ENCODE measurements at regions of chr19 and their contacts with region 1.

Region 1: GRCh38 chr19:9621156-9622037 is at the start of gene ZNF561:
- DNase-seq: peak; percentile 84 to 93
- ATAC-seq: peak; percentile 93 to 98 (median 96)
- H3K4me3 ChIP-seq: peak within 1 kb of the TSS; percentile 94
- H3K27ac ChIP-seq: peak within 1 kb of the TSS; percentile 84
- H3K4me1 ChIP-seq: peaks cover 15% of the 10 kb centered on the region
- H3K27me3 ChIP-seq: no peaks in the 10 kb centered on the region
- CTCF ChIP-seq: no peak
- total RNA-seq, gene ZNF561: 8.2 to 17.9 (median 14.3) TPM

Region 2: DNA sequence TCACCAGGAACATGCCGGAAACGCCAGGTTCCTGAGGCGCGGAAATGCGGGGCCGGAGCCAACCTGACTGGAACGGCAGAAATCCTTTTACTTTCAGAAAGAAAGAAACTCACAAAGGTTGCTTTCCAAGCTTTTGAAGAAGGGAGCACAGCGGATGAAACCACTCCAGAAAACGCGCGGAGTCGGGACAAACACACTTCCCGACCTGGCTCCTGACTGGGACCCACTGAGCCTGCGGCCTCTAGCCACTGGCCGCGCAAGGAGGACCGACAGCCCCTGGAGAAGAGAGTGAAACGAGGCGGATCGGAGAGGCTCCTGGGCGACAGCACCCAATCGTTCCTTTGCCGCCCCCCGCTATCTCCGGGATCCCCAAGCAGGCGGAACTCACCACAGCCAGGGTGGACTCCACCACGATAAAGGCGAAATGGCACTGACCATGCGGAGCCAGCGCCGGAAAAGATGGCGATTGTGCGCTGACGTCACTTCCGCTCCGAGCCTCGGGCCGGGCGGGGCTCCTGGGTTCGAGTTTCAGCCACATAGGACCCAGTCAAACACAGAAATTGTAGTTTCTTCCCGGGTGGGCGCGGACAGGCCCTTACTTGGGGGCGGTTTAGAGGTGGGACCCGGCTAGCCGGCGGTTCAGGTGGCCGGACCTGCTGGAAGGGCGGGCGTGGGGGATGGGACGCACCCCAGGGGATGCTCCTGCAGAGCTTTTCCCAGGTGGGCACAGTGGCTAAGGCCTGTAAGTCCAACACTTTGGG is 37.1 kb before region 1 on chr19 and contains the start of gene ZNF121:
- intact Hi-C with region 1: loop called in 1 of 2 experiments (anchors 5 kb)
- DNase-seq: peak; percentile 86 to 91
- ATAC-seq: peak; percentile 95 to 99 (median 98)
- H3K4me3 ChIP-seq: peak within 1 kb of the TSS; percentile 99
- H3K27ac ChIP-seq: peak within 1 kb of the TSS; percentile 98
- H3K4me1 ChIP-seq: peaks cover 19% of the 10 kb centered on the region
- H3K27me3 ChIP-seq: peaks cover 0 to 17% (median 0%) of the 10 kb centered on the region in 3 donors
- CTCF ChIP-seq: no peak
- total RNA-seq, gene ZNF121: 15.6 to 32.2 (median 18.0) TPM

Region 3: GRCh38 chr19:9768175-9769112 is 147.0 kb after region 1 on chr19 and contains the start of gene ZNF846:
- intact Hi-C with region 1: loop called in 1 of 2 experiments (anchors 10 kb)
- DNase-seq: peak; percentile 94 to 96
- ATAC-seq: peak; percentile 100
- H3K4me3 ChIP-seq: peak within 1 kb of the TSS; percentile 80
- H3K27ac ChIP-seq: peak within 1 kb of the TSS; percentile 93
- H3K4me1 ChIP-seq: peaks cover 14% of the 10 kb centered on the region
- H3K27me3 ChIP-seq: no peaks in the 10 kb centered on the region
- CTCF ChIP-seq: no peak
- total RNA-seq, gene ZNF846: 2.1 to 6.8 (median 4.2) TPM

Measured in psoas muscle (tissue), 8 donors.